Astrocyte of the spinal cord (primary cell): ENCODE measurements at regions of chr6 and their contacts with region 1.

Region 1: DNA sequence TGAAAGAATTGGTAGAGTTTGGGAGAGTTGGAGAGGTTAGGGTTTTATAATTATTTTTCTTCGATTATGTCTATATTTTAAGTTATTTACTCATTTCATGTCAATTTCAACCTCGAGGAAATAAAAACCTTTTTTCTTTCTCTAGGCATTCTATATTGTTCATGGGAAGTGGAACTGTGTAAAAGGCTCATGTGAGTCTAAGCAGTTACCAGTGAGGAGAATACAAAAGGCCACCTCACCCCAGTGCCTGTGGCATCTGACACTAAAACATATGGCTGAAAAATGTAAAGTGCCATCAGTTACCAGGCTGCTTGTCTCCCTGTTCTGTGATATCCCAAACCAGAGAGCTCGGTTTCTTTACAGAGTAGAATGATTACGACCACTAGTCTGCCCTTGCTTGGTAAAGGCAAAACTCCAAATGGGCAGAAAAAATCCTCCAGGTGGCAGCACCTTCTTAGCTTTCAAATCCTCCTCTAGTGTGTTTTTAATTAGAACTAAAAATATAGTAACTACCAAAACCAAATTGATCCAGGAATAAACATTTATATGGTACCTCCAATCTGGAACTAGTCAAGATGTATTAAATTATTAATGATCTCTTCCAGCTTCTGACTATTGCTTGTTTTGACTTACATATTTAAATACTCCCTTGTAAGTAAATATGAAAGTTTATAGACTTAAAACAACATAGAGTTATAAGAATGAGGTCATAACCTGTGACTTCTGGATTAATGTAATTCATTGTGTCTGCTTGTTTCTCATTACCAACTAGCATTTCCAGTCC is 122.6 kb upstream of the MCHR2 start:
- DNase-seq: peak; percentile 83
- H3K4me3 ChIP-seq: no peak overlapping the region
- CTCF ChIP-seq: peak; percentile 69

Region 2: GRCh38 chr6:99603421-99604165 is 513.0 kb before region 1 on chr6:
- in situ Hi-C with region 1: no loop called
- DNase-seq: peak; percentile 23
- H3K4me3 ChIP-seq: peak overlapping the region; percentile 25
- CTCF ChIP-seq: no peak

Region 3: GRCh38 chr6:100008857-100009256 is 107.7 kb before region 1 on chr6:
- in situ Hi-C with region 1: no loop called
- DNase-seq: no peak
- H3K4me3 ChIP-seq: no peak overlapping the region
- CTCF ChIP-seq: no peak

Region 4: DNA sequence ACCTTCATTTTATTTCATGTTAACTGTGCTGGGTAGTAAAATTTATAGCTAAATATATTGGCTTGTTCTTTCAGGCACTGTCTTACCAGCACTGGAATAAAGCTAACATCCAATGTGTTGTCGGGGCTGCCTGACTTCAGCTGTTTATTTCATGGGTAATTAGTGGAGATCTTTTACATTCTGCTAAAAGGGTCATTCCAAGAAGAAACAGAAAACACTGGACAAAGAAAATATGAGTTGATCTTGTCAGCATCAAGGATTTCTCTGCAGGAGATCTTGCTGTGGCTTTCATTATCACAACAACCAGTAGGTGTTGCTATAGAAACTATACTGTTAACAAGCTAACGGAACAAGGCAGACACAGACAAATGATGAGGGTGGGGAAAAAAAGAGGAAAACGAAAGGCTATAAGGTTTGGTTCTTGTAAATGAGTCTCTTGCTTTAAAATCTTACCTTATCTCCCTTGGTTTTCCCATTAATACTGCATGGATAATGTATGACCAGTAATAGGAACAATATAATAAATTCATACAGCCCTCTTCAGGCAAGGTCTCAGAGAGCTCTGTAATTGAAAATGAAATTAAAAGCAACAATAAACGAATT is 141.3 kb after region 1 on chr6:
- in situ Hi-C with region 1: no loop called
- DNase-seq: peak; percentile 86
- H3K4me3 ChIP-seq: no peak overlapping the region
- CTCF ChIP-seq: no peak

Region 5: GRCh38 chr6:100464903-100465700 is 348.5 kb after region 1 on chr6 and contains the start of gene SIM1:
- in situ Hi-C with region 1: loop called (anchors 25 kb)
- DNase-seq: peak; percentile 77
- H3K4me3 ChIP-seq: peak within 1 kb of the TSS; percentile 20
- CTCF ChIP-seq: no peak